ENCODE measurements at regions of chr14 and their contacts with region 1.

Region 1: GRCh38 chr14:77067632-77068514 is 30.2 kb upstream of the CIPC start:
- DNase-seq: peak in 4 of 5 donors; percentile 45 to 63 (median 58)
- H3K4me3 ChIP-seq: no peak overlapping the region
- H3K4me3 Mint-ChIP-seq: no peak overlapping the region
- H3K27ac ChIP-seq: no peak overlapping the region
- H3K27ac Mint-ChIP-seq: no peak overlapping the region
- H3K4me1 ChIP-seq: no peaks in the 10 kb centered on the region
- H3K4me1 Mint-ChIP-seq: peaks cover 0 to 3% (median under 1%) of the 10 kb centered on the region in 4 donors
- H3K27me3 ChIP-seq: no peaks in the 10 kb centered on the region
- H3K27me3 Mint-ChIP-seq: peaks cover 0 to 4% of the 10 kb centered on the region in 2 donors

Region 2: GRCh38 chr14:76904740-76905438 is 163.0 kb before region 1 on chr14:
- CTCF ChIA-PET with region 1: interaction called, 86 read pairs
- POLR2A ChIA-PET with region 1: interaction called, 3 read pairs
- intact Hi-C with region 1: no loop called
- DNase-seq: peak; percentile 54 to 85 (median 62)
- H3K4me3 ChIP-seq: no peak overlapping the region
- H3K4me3 Mint-ChIP-seq: peak overlapping the region; percentile 54 to 77 (median 66)
- H3K27ac ChIP-seq: no peak overlapping the region
- H3K27ac Mint-ChIP-seq: peak overlapping the region; percentile 71 to 93 (median 88)
- H3K4me1 ChIP-seq: peaks cover 36% of the 10 kb centered on the region
- H3K4me1 Mint-ChIP-seq: peaks cover 21 to 36% (median 25%) of the 10 kb centered on the region in 4 donors
- H3K27me3 ChIP-seq: no peaks in the 10 kb centered on the region
- H3K27me3 Mint-ChIP-seq: no peaks in the 10 kb centered on the region

Region 3: DNA sequence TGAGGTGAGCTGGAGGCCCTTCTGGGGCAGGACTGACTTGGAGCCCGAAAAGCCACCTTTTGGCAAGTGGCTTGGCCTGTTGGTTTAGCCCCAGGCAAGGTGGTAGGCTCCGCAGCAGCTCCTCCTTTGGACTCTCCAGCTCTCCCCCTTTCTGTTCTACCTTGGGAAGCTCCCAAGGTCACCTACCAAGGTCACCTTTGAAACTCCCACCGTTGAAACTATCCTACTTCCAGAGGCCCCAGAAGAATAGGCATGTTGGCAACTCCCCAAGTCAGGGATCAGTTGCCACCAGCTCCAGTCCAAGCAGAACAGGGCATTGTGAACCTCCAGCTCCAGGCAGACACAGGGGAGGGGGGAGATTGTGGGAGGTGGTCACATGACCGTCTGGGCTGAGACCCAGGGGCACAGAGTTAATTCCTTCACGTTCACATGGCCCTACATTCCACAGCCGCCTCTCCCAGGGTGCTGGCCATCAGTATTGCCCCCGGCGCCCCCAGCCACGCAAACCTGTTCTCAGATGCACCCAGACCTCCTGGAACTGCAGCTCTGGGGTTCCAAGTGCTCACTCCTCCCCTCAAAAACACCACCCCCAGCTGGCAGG is 53.8 kb before region 1 on chr14:
- CTCF ChIA-PET with region 1: no interaction called
- POLR2A ChIA-PET with region 1: no interaction called
- intact Hi-C with region 1: no loop called
- DNase-seq: no peak
- H3K4me3 ChIP-seq: no peak overlapping the region
- H3K4me3 Mint-ChIP-seq: no peak overlapping the region
- H3K27ac ChIP-seq: no peak overlapping the region
- H3K27ac Mint-ChIP-seq: peak overlapping the region in 1 of 7 donors; percentile 47
- H3K4me1 ChIP-seq: peaks cover 15% of the 10 kb centered on the region
- H3K4me1 Mint-ChIP-seq: peaks cover 16 to 25% (median 19%) of the 10 kb centered on the region in 4 donors
- H3K27me3 ChIP-seq: no peaks in the 10 kb centered on the region
- H3K27me3 Mint-ChIP-seq: no peaks in the 10 kb centered on the region

Region 4: DNA sequence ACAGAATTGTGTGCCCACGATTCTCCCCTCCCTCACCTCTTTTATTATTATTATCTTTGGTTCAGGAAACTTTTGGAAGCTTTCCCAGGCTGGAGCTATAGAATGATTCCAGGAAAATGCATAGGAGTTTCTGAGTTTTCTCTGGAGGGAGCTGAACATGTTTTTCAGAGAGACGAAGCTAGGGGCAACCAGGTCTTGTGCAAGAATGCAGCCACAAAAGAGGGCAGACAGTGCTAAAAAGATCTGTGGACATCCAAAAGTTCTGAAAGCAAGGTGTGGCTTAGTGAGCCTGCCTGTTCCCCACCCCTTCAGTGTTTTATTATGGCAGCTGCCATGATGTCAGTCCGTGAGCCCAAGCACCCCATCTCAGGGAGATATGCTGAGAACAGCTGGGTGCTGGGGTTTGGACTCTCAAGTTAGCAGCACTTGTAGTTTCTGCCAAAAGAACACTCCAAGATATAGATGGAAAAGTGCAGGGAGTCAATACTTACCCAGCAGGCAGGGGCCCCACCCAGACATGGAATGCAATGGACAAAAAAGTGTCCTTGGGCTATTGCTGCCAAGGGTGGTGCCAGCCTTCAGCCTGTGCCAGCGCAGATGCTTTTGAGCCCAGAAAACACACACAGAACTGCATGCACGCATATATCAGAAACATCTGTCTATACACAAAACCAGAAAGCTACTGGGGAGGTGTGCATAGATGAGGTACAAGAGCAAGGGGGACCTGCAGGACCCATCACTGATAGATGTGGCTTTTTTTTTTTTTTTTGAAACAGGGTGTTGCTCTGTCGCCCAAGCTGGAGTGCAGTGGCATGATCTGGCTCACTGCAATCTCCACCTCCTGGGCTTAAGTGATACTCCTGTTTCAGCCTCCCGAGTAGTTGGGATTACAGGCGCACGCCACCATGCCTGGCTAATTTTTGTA is 22.4 kb before region 1 on chr14:
- CTCF ChIA-PET with region 1: interaction called, 122 read pairs
- POLR2A ChIA-PET with region 1: interaction called, 6 read pairs
- intact Hi-C with region 1: no loop called
- DNase-seq: no peak
- H3K4me3 ChIP-seq: no peak overlapping the region
- H3K4me3 Mint-ChIP-seq: no peak overlapping the region
- H3K27ac ChIP-seq: no peak overlapping the region
- H3K27ac Mint-ChIP-seq: peak overlapping the region in 4 of 7 donors; percentile 8 to 61 (median 22)
- H3K4me1 ChIP-seq: peaks cover 64% of the 10 kb centered on the region
- H3K4me1 Mint-ChIP-seq: peaks cover 32 to 66% (median 56%) of the 10 kb centered on the region in 4 donors
- H3K27me3 ChIP-seq: no peaks in the 10 kb centered on the region
- H3K27me3 Mint-ChIP-seq: no peaks in the 10 kb centered on the region

Region 5: GRCh38 chr14:77086017-77086736 is 18.3 kb after region 1 on chr14:
- CTCF ChIA-PET with region 1: interaction called, 28 read pairs
- POLR2A ChIA-PET with region 1: no interaction called
- intact Hi-C with region 1: no loop called
- DNase-seq: peak in 4 of 5 donors; percentile 41 to 59 (median 48)
- H3K4me3 ChIP-seq: no peak overlapping the region
- H3K4me3 Mint-ChIP-seq: peak overlapping the region in 1 of 8 donors; percentile 33
- H3K27ac ChIP-seq: no peak overlapping the region
- H3K27ac Mint-ChIP-seq: peak overlapping the region in 5 of 7 donors; percentile 68 to 97 (median 90)
- H3K4me1 ChIP-seq: peaks cover 17% of the 10 kb centered on the region
- H3K4me1 Mint-ChIP-seq: peaks cover 4 to 19% (median 8%) of the 10 kb centered on the region in 4 donors
- H3K27me3 ChIP-seq: no peaks in the 10 kb centered on the region
- H3K27me3 Mint-ChIP-seq: peaks cover 2 to 9% of the 10 kb centered on the region in 2 donors

Measured in CD4-positive, alpha-beta memory T cell (primary cell).